ENCODE measurements at regions of chr13 and their contacts with region 1.

Region 1: DNA sequence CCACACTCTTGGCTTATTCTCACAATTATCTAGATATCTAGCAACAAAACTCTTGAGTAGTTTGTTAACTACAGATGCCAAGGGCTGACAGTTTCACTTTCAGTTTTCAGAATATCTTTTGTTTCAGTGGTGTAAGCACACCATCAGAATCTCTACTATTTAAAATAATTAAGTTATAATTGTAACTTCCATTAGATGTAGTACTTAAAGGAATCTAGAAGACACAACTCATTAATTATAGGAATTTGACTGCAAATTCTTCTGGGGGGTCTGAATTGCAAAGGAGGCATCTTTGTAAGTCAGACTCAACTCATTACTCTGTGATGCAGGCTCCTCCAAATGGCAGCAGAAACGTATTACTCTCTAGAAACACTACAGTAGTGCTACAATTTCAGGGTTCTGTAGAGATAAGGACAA is 44.9 kb upstream of the USPL1 start:
- DNase-seq: peak in 7 of 9 donors; percentile 19 to 65 (median 49)
- ATAC-seq: peak; percentile 69
- H3K4me3 ChIP-seq: peak overlapping the region; percentile 55
- H3K4me3 Mint-ChIP-seq: peak overlapping the region; percentile 66 to 88 (median 81)
- H3K27ac ChIP-seq: peak overlapping the region; percentile 81
- H3K27ac Mint-ChIP-seq: peak overlapping the region; percentile 88 to 97 (median 94)
- H3K4me1 ChIP-seq: peaks cover 13 to 24% of the 10 kb centered on the region in 2 donors
- H3K4me1 Mint-ChIP-seq: peaks cover 14 to 42% (median 36%) of the 10 kb centered on the region in 7 donors
- H3K27me3 ChIP-seq: no peaks in the 10 kb centered on the region
- H3K27me3 Mint-ChIP-seq: peaks cover 0 to 3% (median 0%) of the 10 kb centered on the region in 5 donors

Region 2: GRCh38 chr13:30142486-30143211 is 430.2 kb before region 1 on chr13:
- CTCF ChIA-PET with region 1: no interaction called
- POLR2A ChIA-PET with region 1: no interaction called
- intact Hi-C with region 1: loop called in 1 of 2 experiments (anchors 5 kb)
- DNase-seq: peak in 1 of 9 donors; percentile 49
- ATAC-seq: peak; percentile 41
- H3K4me3 ChIP-seq: no peak overlapping the region
- H3K4me3 Mint-ChIP-seq: peak overlapping the region in 4 of 10 donors; percentile 10 to 61 (median 29)
- H3K27ac ChIP-seq: no peak overlapping the region
- H3K27ac Mint-ChIP-seq: peak overlapping the region; percentile 45 to 93 (median 76)
- H3K4me1 ChIP-seq: peaks cover 25 to 47% of the 10 kb centered on the region in 2 donors
- H3K4me1 Mint-ChIP-seq: peaks cover 29 to 64% (median 60%) of the 10 kb centered on the region in 7 donors
- H3K27me3 ChIP-seq: no peaks in the 10 kb centered on the region
- H3K27me3 Mint-ChIP-seq: peaks cover 0 to 5% (median 0%) of the 10 kb centered on the region in 5 donors

Region 3: GRCh38 chr13:30257468-30258099 is 315.3 kb before region 1 on chr13:
- CTCF ChIA-PET with region 1: no interaction called
- POLR2A ChIA-PET with region 1: no interaction called
- intact Hi-C with region 1: loop called in 1 of 2 experiments (anchors 5 kb)
- DNase-seq: no peak
- ATAC-seq: no peak
- H3K4me3 ChIP-seq: no peak overlapping the region
- H3K4me3 Mint-ChIP-seq: no peak overlapping the region
- H3K27ac ChIP-seq: no peak overlapping the region
- H3K27ac Mint-ChIP-seq: peak overlapping the region in 2 of 9 donors; percentile 18 to 62
- H3K4me1 ChIP-seq: no peaks in the 10 kb centered on the region
- H3K4me1 Mint-ChIP-seq: peaks cover 0 to 21% (median 14%) of the 10 kb centered on the region in 7 donors
- H3K27me3 ChIP-seq: no peaks in the 10 kb centered on the region
- H3K27me3 Mint-ChIP-seq: no peaks in the 10 kb centered on the region

Region 4: GRCh38 chr13:30355384-30355699 is 217.5 kb before region 1 on chr13:
- CTCF ChIA-PET with region 1: no interaction called
- POLR2A ChIA-PET with region 1: no interaction called
- intact Hi-C with region 1: loop called in 1 of 2 experiments (anchors 1 kb)
- DNase-seq: peak in 3 of 9 donors; percentile 26 to 40 (median 28)
- ATAC-seq: peak; percentile 84
- H3K4me3 ChIP-seq: no peak overlapping the region
- H3K4me3 Mint-ChIP-seq: peak overlapping the region in 7 of 10 donors; percentile 14 to 61 (median 32)
- H3K27ac ChIP-seq: no peak overlapping the region
- H3K27ac Mint-ChIP-seq: peak overlapping the region in 3 of 9 donors; percentile 8 to 75 (median 39)
- H3K4me1 ChIP-seq: peaks cover 0 to 4% of the 10 kb centered on the region in 2 donors
- H3K4me1 Mint-ChIP-seq: peaks cover 10 to 40% (median 35%) of the 10 kb centered on the region in 7 donors
- H3K27me3 ChIP-seq: no peaks in the 10 kb centered on the region
- H3K27me3 Mint-ChIP-seq: no peaks in the 10 kb centered on the region

Region 5: DNA sequence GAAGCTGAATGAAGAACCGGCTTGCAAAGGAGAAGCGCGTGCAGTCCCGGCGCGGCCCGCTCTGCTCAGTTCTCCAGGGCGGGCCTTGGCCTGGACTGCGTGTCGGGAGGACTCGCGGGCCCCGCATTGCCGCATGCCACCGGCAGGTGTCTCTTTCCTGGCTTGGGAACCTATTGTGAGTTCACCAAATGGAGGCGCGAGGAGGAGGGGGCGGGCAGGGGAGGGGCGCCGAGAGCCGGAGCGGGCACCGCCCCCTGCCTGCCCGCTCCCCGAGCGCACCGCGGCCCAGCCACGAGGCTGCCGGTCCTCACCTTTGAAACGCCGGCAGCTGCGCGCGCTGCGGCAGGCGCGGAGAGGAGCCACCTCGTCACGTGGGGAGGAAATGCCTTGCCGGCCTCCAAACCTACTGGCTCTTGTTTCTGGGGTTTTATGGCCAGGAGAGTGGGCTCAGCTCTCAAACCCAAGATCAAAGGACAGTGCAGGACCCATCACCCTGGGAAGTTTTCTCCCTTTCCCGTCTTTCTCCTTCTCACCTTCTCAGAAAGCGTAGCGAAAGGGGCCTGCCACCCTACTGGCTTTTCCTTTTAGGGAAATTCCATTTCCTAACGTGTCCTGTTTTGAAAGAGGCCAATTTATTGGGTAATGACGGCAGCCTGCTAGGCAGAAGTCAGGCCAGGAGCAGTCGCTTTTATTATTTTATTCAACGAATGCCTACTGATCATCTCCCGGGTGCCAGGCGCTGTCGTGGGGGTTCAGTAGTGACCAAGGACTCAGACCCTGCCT is 164.4 kb before region 1 on chr13:
- CTCF ChIA-PET with region 1: interaction called, 3 read pairs
- POLR2A ChIA-PET with region 1: no interaction called
- intact Hi-C with region 1: loop called in 1 of 2 experiments (anchors 1 kb)
- DNase-seq: peak; percentile 78 to 89 (median 85)
- ATAC-seq: peak; percentile 97
- H3K4me3 ChIP-seq: peak overlapping the region; percentile 44
- H3K4me3 Mint-ChIP-seq: peak overlapping the region; percentile 64 to 78 (median 72)
- H3K27ac ChIP-seq: peak overlapping the region; percentile 52
- H3K27ac Mint-ChIP-seq: peak overlapping the region; percentile 51 to 87 (median 83)
- H3K4me1 ChIP-seq: peaks cover 9 to 14% of the 10 kb centered on the region in 2 donors
- H3K4me1 Mint-ChIP-seq: peaks cover 6 to 46% (median 37%) of the 10 kb centered on the region in 7 donors
- H3K27me3 ChIP-seq: no peaks in the 10 kb centered on the region
- H3K27me3 Mint-ChIP-seq: peaks cover 0 to 12% (median 0%) of the 10 kb centered on the region in 5 donors

Region 6: DNA sequence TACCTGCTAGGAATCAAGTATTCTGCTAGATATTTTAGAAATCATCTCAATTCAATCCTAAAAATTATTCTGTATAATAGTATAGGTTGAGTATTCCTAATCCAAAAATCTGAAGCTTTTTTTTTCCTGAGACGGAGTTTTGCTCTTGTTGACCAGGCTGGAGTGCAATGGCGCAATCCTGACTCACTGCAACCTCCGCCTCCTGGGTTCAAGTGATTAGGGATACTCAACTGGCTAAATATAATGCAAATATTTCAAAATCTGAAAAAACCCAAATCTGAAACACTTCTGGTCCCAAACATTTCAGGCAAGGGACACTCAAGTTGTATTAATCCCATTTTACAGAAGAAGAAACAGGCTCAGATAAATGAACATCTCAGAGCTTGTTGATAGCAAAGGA is 27.6 kb after region 1 on chr13:
- CTCF ChIA-PET with region 1: no interaction called
- POLR2A ChIA-PET with region 1: no interaction called
- intact Hi-C with region 1: no loop called
- DNase-seq: no peak
- ATAC-seq: no peak
- H3K4me3 ChIP-seq: no peak overlapping the region
- H3K4me3 Mint-ChIP-seq: no peak overlapping the region
- H3K27ac ChIP-seq: no peak overlapping the region
- H3K27ac Mint-ChIP-seq: no peak overlapping the region
- H3K4me1 ChIP-seq: no peaks in the 10 kb centered on the region
- H3K4me1 Mint-ChIP-seq: peaks cover 0 to 4% (median 0%) of the 10 kb centered on the region in 7 donors
- H3K27me3 ChIP-seq: no peaks in the 10 kb centered on the region
- H3K27me3 Mint-ChIP-seq: peaks cover 0 to 8% (median 0%) of the 10 kb centered on the region in 5 donors

Measured in naive thymus-derived CD4-positive, alpha-beta T cell (primary cell).